ENCODE measurements at regions of chr18 and their contacts with region 1.

Region 1: GRCh38 chr18:12744103-12744502 is 41.3 kb downstream of the PSMG2 start:
- DNase-seq: peak; percentile 79
- H3K4me3 ChIP-seq: no peak overlapping the region
- H3K27ac ChIP-seq: no peak overlapping the region
- H3K4me1 ChIP-seq: no peaks in the 10 kb centered on the region
- H3K27me3 ChIP-seq: peaks cover 0 to 2% of the 10 kb centered on the region in 2 experiments
- CTCF ChIP-seq: peak; percentile 37 to 40
- POLR2A ChIP-seq: no peak

Region 2: GRCh38 chr18:12726774-12727550 is 17.1 kb before region 1 on chr18:
- CTCF ChIA-PET with region 1: interaction called, 10 read pairs
- POLR2A ChIA-PET with region 1: no interaction called
- dilution Hi-C with region 1: no loop called
- intact Hi-C with region 1: no loop called
- DNase-seq: peak; percentile 81
- H3K4me3 ChIP-seq: no peak overlapping the region
- H3K27ac ChIP-seq: no peak overlapping the region
- H3K4me1 ChIP-seq: no peaks in the 10 kb centered on the region
- H3K27me3 ChIP-seq: no peaks in the 10 kb centered on the region
- CTCF ChIP-seq: peak; percentile 76 to 80
- POLR2A ChIP-seq: no peak

Region 3: DNA sequence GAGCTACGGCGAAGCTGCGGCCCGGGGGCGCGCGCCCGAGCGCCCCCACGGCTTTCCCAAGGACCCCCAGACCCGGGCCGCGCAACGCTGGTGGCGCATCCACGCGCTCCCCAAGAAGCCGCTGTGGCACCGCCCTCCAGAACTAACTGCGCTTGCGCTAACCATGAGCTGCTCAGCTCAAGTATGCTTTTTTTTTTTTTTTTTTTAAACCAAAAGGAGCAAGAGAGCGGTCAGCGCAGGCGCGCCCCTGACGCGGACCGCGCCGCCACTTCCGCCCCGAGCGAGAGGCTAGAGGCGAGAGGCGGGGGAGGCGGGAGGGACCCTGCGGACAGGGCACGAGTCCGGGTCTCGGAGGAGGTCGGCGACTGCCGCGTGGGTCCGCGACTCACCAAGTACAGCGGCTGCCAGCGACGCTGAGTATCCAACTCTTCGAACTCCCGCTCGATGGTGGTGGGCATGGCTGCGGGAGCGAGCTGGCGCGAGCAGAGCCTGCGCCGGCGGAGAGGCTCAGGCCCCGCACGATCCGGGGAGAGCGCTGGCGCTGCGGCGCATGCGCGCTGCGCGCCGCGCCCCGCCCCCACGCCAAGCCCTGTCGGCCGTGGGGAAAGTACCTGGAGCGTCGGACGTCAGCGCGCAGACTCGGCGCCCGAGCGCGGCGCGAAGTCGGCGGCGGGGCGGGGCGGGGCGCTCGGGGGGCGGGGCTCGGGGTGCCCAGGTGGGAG is 139.7 kb after region 1 on chr18 and contains the start of gene PTPN2:
- CTCF ChIA-PET with region 1: interaction called, 36 read pairs
- POLR2A ChIA-PET with region 1: no interaction called
- dilution Hi-C with region 1: no loop called
- intact Hi-C with region 1: no loop called
- DNase-seq: peak; percentile 95
- H3K4me3 ChIP-seq: peak within 1 kb of the TSS; percentile 72 to 92 (median 74)
- H3K27ac ChIP-seq: peak within 1 kb of the TSS; percentile 97
- H3K4me1 ChIP-seq: peaks cover 6% of the 10 kb centered on the region
- H3K27me3 ChIP-seq: no peaks in the 10 kb centered on the region
- CTCF ChIP-seq: no peak
- POLR2A ChIP-seq: peak; percentile 96
- total RNA-seq, gene PTPN2: 20.9 and 21.7 TPM in 2 replicates

Region 4: GRCh38 chr18:12890506-12890905 is 146.4 kb after region 1 on chr18:
- CTCF ChIA-PET with region 1: interaction called, 36 read pairs
- POLR2A ChIA-PET with region 1: interaction called, 4 read pairs
- dilution Hi-C with region 1: no loop called
- intact Hi-C with region 1: loop called (anchors 1 kb)
- DNase-seq: no peak
- H3K4me3 ChIP-seq: no peak overlapping the region
- H3K27ac ChIP-seq: no peak overlapping the region
- H3K4me1 ChIP-seq: no peaks in the 10 kb centered on the region
- H3K27me3 ChIP-seq: peaks cover 7 to 16% of the 10 kb centered on the region in 2 experiments
- CTCF ChIP-seq: peak in 1 of 2 donors; percentile 13
- POLR2A ChIP-seq: no peak

Region 5: DNA sequence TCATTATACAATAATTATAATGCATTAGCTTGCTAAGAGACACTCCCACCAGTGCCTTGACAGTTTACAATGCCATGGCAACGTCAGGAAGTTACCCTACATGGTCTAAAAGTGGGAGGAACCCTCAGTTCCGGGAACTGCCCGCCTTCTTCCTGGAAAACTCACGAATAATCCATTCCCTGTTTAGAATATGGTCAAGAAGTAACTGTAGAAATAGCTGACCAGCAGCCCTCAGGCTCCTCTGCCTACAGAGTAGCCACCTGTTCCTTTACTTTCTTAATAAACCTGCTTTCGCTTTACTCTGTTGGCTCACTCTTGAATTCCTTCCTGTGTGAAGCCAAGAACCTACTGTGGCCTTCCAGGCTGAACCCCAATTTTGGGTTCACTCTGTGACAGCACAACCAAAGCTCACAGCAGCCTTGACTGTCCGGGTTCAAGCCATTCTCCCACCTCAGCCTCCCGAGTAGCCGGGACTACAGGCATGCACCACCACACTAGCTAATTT is 160.0 kb after region 1 on chr18:
- CTCF ChIA-PET with region 1: interaction called, 10 read pairs
- POLR2A ChIA-PET with region 1: no interaction called
- dilution Hi-C with region 1: no loop called
- intact Hi-C with region 1: no loop called
- DNase-seq: no peak
- H3K4me3 ChIP-seq: no peak overlapping the region
- H3K27ac ChIP-seq: no peak overlapping the region
- H3K4me1 ChIP-seq: peaks cover 10% of the 10 kb centered on the region
- H3K27me3 ChIP-seq: peaks cover 21 to 22% of the 10 kb centered on the region in 2 experiments
- CTCF ChIP-seq: no peak
- POLR2A ChIP-seq: no peak